ENCODE measurements at regions of chr4 and their contacts with region 1.

Region 1: DNA sequence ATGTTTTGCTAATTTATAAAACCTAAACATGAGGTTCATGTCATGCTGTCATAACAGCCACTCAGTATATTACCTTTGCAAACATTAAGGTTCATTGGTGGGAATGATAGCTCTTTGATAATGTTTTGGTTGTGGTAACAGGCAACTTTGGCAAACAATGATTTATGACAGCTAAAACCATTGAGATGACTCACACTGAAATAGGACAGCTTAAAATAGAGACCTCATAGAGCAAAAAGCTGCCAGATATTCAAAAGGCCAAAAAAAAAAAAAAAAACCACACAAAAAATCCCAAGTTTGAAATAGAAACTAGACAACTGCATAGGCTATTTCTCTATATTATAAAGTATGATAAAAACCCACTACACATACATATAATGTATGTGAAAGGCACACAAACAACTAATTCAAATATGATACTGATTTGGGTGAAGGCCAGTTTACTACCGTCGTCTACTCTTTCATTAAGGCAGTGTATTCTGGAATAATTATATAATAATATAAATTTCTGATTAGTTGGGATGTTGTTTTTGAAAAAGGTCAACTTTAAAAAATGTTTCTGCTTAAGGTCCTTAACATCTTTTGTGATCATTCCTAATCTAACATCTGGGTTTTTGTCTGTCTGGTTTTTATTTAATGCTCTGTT is 646.0 kb upstream of the PITX2 start:
- DNase-seq: no peak
- ATAC-seq: no peak
- H3K4me3 ChIP-seq: peak overlapping the region in 1 of 2 donors; percentile 34
- H3K27ac ChIP-seq: no peak overlapping the region
- H3K4me1 ChIP-seq: peaks cover 2 to 7% of the 10 kb centered on the region in 2 donors
- H3K27me3 ChIP-seq: no peaks in the 10 kb centered on the region

Region 2: GRCh38 chr4:111213531-111213930 is 55.4 kb before region 1 on chr4:
- intact Hi-C with region 1: loop called in 1 of 2 experiments (anchors 10 kb)
- DNase-seq: no peak
- ATAC-seq: no peak
- H3K4me3 ChIP-seq: no peak overlapping the region
- H3K27ac ChIP-seq: no peak overlapping the region
- H3K4me1 ChIP-seq: peaks cover 0 to 2% of the 10 kb centered on the region in 2 donors
- H3K27me3 ChIP-seq: no peaks in the 10 kb centered on the region

Region 3: DNA sequence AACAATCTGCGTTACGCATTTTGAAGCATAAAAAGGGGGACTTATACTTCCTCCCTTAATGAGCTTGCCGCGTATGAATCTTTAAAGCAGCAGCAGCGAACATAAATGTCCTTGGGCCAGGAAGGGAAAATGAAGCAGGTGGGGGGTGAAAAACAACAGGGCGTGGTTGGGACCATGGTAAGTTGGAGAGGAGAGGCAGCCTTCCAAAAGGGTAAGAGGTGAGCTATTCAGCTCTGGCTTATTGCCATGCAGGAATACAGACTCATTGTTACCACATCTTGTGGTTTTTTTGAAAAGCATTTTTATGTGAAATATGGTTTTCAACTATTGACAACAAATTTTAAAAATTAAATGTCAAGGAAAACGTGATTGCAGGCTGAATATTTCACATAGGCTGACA is 165.7 kb after region 1 on chr4:
- intact Hi-C with region 1: no loop called
- DNase-seq: no peak
- ATAC-seq: no peak
- H3K4me3 ChIP-seq: no peak overlapping the region
- H3K27ac ChIP-seq: no peak overlapping the region
- H3K4me1 ChIP-seq: no peaks in the 10 kb centered on the region
- H3K27me3 ChIP-seq: no peaks in the 10 kb centered on the region

Region 4: GRCh38 chr4:111748157-111748556 is 479.3 kb after region 1 on chr4:
- intact Hi-C with region 1: no loop called
- DNase-seq: no peak
- ATAC-seq: no peak
- H3K4me3 ChIP-seq: no peak overlapping the region
- H3K27ac ChIP-seq: no peak overlapping the region
- H3K4me1 ChIP-seq: no peaks in the 10 kb centered on the region
- H3K27me3 ChIP-seq: peaks cover 0 to 1% of the 10 kb centered on the region in 2 donors

Measured in aorta (tissue), 5 donors.